ENCODE measurements at regions of chr4 and their contacts with region 1.

Region 1: GRCh38 chr4:46844325-46844917 is 64.6 kb downstream of the COX7B2 start:
- H3K4me3 Mint-ChIP-seq: no peak overlapping the region
- H3K27ac Mint-ChIP-seq: no peak overlapping the region
- H3K4me1 Mint-ChIP-seq: no peaks in the 10 kb centered on the region
- H3K27me3 Mint-ChIP-seq: no peaks in the 10 kb centered on the region

Region 2: GRCh38 chr4:47032415-47033106 is 188.1 kb after region 1 on chr4:
- intact Hi-C with region 1: loop called (anchors 10 kb)
- H3K4me3 Mint-ChIP-seq: peak overlapping the region; percentile 60
- H3K27ac Mint-ChIP-seq: no peak overlapping the region
- H3K4me1 Mint-ChIP-seq: peaks cover 19% of the 10 kb centered on the region
- H3K27me3 Mint-ChIP-seq: peaks cover 44% of the 10 kb centered on the region

Region 3: GRCh38 chr4:47122592-47123291 is 278.3 kb after region 1 on chr4:
- intact Hi-C with region 1: loop called (anchors 2 kb)
- H3K4me3 Mint-ChIP-seq: no peak overlapping the region
- H3K27ac Mint-ChIP-seq: peak overlapping the region; percentile 63
- H3K4me1 Mint-ChIP-seq: peaks cover 11% of the 10 kb centered on the region
- H3K27me3 Mint-ChIP-seq: peaks cover 17% of the 10 kb centered on the region

Region 4: GRCh38 chr4:47215759-47216158 is 371.3 kb after region 1 on chr4:
- intact Hi-C with region 1: loop called (anchors 2 kb)
- H3K4me3 Mint-ChIP-seq: no peak overlapping the region
- H3K27ac Mint-ChIP-seq: no peak overlapping the region
- H3K4me1 Mint-ChIP-seq: no peaks in the 10 kb centered on the region
- H3K27me3 Mint-ChIP-seq: peaks cover 4% of the 10 kb centered on the region

Region 5: GRCh38 chr4:47383829-47384427 is 539.5 kb after region 1 on chr4:
- intact Hi-C with region 1: loop called (anchors 2 kb)
- H3K4me3 Mint-ChIP-seq: no peak overlapping the region
- H3K27ac Mint-ChIP-seq: no peak overlapping the region
- H3K4me1 Mint-ChIP-seq: no peaks in the 10 kb centered on the region
- H3K27me3 Mint-ChIP-seq: no peaks in the 10 kb centered on the region